ENCODE measurements at regions of chr11 and their contacts with region 1.

Region 1: DNA sequence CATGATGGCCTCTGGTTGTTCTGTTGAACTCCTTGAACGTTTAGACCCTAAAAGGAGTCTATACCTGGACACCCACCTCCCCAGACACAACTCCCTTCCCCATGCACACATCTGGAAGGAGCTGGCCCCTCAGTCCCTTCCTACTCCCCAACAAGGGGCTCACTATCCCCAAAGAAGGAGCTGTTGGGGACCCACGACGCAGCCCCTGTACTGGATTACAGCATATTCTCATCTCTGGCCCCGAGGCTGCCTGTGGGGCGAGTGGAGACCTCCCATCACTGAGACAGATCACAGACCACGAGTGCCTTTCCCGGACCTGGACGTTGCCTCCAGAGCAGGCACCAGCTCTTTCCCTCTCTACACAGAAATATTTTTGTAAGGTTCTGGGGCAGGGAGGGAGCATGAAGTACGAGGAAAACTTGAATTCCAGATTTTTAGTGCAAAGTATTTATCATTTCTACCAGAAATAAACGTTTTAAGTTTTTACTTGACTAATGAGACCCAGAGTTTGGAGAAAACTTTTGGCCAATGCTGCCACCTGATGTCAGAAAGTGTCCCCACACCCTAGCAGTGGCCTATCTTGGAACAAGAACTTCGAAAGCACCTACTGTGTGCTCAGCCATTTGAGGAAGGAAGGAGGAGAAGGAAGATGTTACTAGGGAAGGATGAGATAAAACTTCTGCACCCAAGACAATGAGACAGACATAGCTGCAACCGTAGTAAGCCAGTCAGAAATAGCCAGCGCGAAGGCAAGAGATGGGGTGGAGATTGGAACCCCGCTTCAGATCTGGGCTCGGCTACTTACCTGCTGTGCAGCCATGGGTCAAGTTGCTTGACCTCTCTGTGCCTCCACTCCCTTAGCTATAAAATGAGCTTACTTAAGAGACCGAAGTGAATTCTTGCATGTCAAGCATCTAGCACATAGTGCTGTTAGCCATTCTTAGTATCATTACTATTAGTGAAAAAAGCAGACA is 10.2 kb upstream of the POU2F3 start:
- DNase-seq: no peak

Region 2: DNA sequence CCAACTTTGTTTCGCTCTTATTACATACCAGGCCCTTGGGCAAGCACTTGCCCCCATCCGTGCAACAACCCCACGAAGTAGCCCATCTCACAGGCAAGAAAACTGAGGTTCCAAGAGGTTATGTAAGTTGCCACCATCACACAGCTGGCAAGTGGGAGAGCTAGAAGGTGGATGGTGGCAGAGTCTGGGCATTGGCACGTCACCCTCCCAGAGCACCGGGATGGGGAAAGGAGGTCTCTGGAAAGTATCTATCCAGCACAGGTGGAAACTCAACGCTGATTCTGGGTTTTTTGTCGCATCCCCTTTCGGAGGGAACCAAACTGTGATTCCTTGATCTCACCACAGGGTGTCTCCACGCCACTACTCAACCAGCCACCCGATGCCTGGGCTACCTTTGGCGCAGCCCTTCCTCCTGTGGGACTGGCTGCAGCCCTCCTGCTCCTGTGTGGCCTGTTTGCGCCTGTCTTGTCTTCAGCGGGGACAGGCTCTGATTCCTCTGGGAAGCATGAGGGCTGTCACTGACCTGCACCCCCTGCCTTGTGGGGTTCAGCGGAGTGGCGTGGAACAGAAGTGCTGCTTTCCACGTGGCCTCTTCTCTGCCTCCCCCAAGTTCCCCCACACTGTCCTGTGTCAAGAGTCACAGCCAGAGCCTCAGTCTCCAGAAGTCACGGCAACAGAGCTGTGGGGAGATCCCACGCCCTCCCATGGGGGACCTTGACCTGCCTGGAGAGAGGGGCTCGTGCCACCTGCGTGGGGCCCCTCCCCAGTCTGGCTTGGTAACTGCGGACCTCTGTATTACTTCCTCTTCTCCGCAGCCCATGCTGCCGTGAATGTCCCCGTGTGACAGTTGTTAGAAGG is 57.5 kb before region 1 on chr11:
- intact Hi-C with region 1: loop called (anchors 1 kb)
- DNase-seq: peak; percentile 74

Region 3: GRCh38 chr11:120182790-120183491 is 46.8 kb before region 1 on chr11:
- intact Hi-C with region 1: no loop called
- DNase-seq: peak; percentile 67

Measured in cardiac septum (tissue), 1 donor.